Aorta (tissue), 5 donors: ENCODE measurements at regions of chr4 and their contacts with region 1.

Region 1: GRCh38 chr4:99563310-99564186 is at the start of gene TRMT10A:
- DNase-seq: peak; percentile 99
- ATAC-seq: peak; percentile 99
- H3K4me3 ChIP-seq: peak within 1 kb of the TSS; percentile 66 to 75
- H3K27ac ChIP-seq: peak within 1 kb of the TSS; percentile 36 to 97
- H3K4me1 ChIP-seq: peaks cover 0 to 3% of the 10 kb centered on the region in 2 donors
- H3K27me3 ChIP-seq: no peaks in the 10 kb centered on the region
- total RNA-seq, gene TRMT10A: 3.3 to 3.7 TPM

Region 2: DNA sequence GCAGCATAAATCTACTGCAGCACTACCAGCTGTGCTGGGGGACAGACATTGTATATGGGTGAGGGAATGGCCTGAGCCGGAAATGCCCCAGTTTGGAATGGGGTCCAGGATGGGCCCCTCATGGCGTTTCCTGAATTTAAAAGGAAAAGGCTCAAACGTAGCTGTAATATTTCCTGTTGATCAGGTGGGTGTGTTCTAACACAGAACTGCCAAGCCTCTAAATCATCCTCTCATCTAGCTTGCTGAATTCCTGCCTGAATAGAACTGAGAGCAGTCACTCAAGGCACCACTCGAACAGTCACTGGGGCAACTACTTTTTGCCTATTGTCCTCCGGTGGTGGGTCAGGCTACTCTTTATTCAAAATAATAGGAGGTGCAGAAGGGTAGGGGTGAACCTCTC is 373.2 kb before region 1 on chr4:
- intact Hi-C with region 1: no loop called
- DNase-seq: no peak
- ATAC-seq: no peak
- H3K4me3 ChIP-seq: no peak overlapping the region
- H3K27ac ChIP-seq: no peak overlapping the region
- H3K4me1 ChIP-seq: no peaks in the 10 kb centered on the region
- H3K27me3 ChIP-seq: no peaks in the 10 kb centered on the region

Region 3: DNA sequence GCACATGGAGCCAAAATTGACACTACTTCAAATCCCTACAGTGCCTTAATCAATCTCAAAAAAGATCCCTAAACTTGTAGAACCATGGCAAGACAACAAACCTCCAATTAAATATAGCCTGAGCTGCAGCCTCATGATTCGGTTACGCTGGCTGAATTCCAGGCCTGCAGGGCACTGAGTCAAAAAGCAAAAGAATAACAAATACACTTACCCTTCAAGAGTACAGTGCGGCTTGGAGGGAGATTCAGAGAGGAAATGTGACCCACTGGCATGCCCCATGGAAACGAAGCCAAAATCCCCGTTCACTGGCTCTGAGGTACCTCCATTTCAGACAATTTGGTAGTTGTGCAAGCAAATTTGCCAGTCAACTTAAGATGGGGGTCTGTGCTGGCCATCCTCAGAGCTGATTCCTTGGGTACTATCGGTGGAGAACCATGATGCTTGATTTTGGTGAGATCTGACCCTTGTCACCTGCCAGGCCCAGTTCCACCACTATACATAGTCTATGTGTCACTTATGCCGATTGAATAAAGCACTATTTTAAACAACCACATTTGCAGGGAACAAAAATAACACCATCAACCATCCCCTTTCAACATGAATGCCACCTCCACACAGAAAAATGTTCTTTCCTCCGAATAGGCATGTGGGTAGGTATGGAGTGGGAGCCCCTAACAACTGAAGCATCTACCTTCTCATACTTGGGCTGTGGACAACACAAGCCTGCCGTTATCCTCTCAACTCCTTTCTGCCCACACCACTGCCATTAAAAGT is 91.9 kb after region 1 on chr4:
- intact Hi-C with region 1: loop called in 1 of 2 experiments (anchors 5 kb)
- DNase-seq: peak; percentile 80 to 82
- ATAC-seq: peak; percentile 28
- H3K4me3 ChIP-seq: no peak overlapping the region
- H3K27ac ChIP-seq: peak overlapping the region in 1 of 2 donors; percentile 38
- H3K4me1 ChIP-seq: peaks cover 0 to 2% of the 10 kb centered on the region in 2 donors
- H3K27me3 ChIP-seq: no peaks in the 10 kb centered on the region

Region 4: GRCh38 chr4:99723612-99724011 is 160.1 kb after region 1 on chr4:
- intact Hi-C with region 1: loop called in 1 of 2 experiments (anchors 5 kb)
- DNase-seq: peak; percentile 72 to 81
- ATAC-seq: peak; percentile 81
- H3K4me3 ChIP-seq: no peak overlapping the region
- H3K27ac ChIP-seq: no peak overlapping the region
- H3K4me1 ChIP-seq: peaks cover 0 to 4% of the 10 kb centered on the region in 2 donors
- H3K27me3 ChIP-seq: no peaks in the 10 kb centered on the region

Region 5: GRCh38 chr4:99808260-99808857 is 244.8 kb after region 1 on chr4:
- intact Hi-C with region 1: loop called (anchors 1 to 2 kb)
- DNase-seq: peak in 1 of 2 donors; percentile 55
- ATAC-seq: peak; percentile 78
- H3K4me3 ChIP-seq: no peak overlapping the region
- H3K27ac ChIP-seq: no peak overlapping the region
- H3K4me1 ChIP-seq: no peaks in the 10 kb centered on the region
- H3K27me3 ChIP-seq: no peaks in the 10 kb centered on the region

Region 6: GRCh38 chr4:99894161-99894997 is 330.8 kb after region 1 on chr4 and contains the start of gene LAMTOR3:
- intact Hi-C with region 1: loop called (anchors 5 kb)
- DNase-seq: peak; percentile 95 to 96
- ATAC-seq: peak; percentile 98
- H3K4me3 ChIP-seq: peak within 1 kb of the TSS; percentile 84 to 91
- H3K27ac ChIP-seq: peak within 1 kb of the TSS in 1 of 2 donors; percentile 70
- H3K4me1 ChIP-seq: peaks cover 0 to 4% of the 10 kb centered on the region in 2 donors
- H3K27me3 ChIP-seq: no peaks in the 10 kb centered on the region
- total RNA-seq, gene LAMTOR3: 31.1 to 31.5 TPM